ENCODE measurements at regions of chr15 and their contacts with region 1.

Region 1: GRCh38 chr15:59329570-59330350 is 42.9 kb downstream of the MYO1E start:
- DNase-seq: peak; percentile 76
- H3K4me3 Mint-ChIP-seq: peak overlapping the region; percentile 63
- H3K27ac Mint-ChIP-seq: peak overlapping the region; percentile 78
- H3K4me1 Mint-ChIP-seq: peaks cover 93% of the 10 kb centered on the region
- H3K27me3 Mint-ChIP-seq: no peaks in the 10 kb centered on the region
- CTCF ChIP-seq: no peak

Region 2: GRCh38 chr15:58698887-58699641 is 630.7 kb before region 1 on chr15:
- CTCF ChIA-PET with region 1: no interaction called
- intact Hi-C with region 1: no loop called
- DNase-seq: no peak
- H3K4me3 Mint-ChIP-seq: no peak overlapping the region
- H3K27ac Mint-ChIP-seq: peak overlapping the region; percentile 62
- H3K4me1 Mint-ChIP-seq: peaks cover 41% of the 10 kb centered on the region
- H3K27me3 Mint-ChIP-seq: no peaks in the 10 kb centered on the region
- CTCF ChIP-seq: no peak

Region 3: GRCh38 chr15:59247364-59247763 is 82.4 kb before region 1 on chr15:
- CTCF ChIA-PET with region 1: interaction called, 4 read pairs
- intact Hi-C with region 1: loop called (anchors 1 kb)
- DNase-seq: peak; percentile 69
- H3K4me3 Mint-ChIP-seq: no peak overlapping the region
- H3K27ac Mint-ChIP-seq: peak overlapping the region; percentile 69
- H3K4me1 Mint-ChIP-seq: peaks cover 88% of the 10 kb centered on the region
- H3K27me3 Mint-ChIP-seq: no peaks in the 10 kb centered on the region
- CTCF ChIP-seq: peak; percentile 44

Region 4: GRCh38 chr15:59299929-59300617 is 29.7 kb before region 1 on chr15:
- CTCF ChIA-PET with region 1: interaction called, 9 read pairs
- intact Hi-C with region 1: loop called (anchors 5 kb)
- DNase-seq: peak; percentile 83
- H3K4me3 Mint-ChIP-seq: peak overlapping the region; percentile 45
- H3K27ac Mint-ChIP-seq: peak overlapping the region; percentile 92
- H3K4me1 Mint-ChIP-seq: peaks cover 85% of the 10 kb centered on the region
- H3K27me3 Mint-ChIP-seq: no peaks in the 10 kb centered on the region
- CTCF ChIP-seq: no peak

Region 5: DNA sequence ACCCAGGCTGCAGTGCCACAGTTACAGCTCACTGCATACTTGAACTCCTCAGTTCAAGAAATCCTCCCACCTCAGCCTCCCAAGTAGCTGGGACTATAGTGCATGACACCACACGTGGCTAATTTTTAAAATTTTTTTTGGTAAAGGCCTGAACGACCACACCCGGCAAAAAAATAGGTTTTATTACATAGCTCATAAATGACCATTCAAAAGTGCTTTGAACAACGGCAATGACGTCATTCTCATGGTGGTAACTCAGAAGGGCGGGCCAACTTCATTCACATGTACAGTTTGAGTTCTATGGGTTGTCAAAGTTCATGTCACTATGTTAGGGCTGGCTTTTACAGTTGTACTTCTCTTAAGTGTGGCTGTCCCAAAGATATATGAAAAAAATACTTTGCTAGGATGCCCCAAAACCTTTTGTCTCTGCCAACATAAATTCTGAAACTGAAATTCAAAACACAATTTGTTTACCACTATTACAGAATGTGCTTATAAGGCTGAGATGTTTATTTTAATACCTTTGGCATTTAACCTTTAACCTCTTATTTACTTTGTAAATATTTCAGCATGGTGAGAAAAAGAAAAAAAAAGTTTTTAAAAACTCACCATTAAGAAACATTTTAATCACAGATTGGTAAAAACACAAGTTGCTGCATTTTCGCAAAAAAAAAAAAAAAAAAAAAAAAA is 36.7 kb after region 1 on chr15:
- CTCF ChIA-PET with region 1: no interaction called
- intact Hi-C with region 1: loop called (anchors 5 kb)
- DNase-seq: no peak
- H3K4me3 Mint-ChIP-seq: peak overlapping the region; percentile 47
- H3K27ac Mint-ChIP-seq: peak overlapping the region; percentile 62
- H3K4me1 Mint-ChIP-seq: peaks cover 50% of the 10 kb centered on the region
- H3K27me3 Mint-ChIP-seq: no peaks in the 10 kb centered on the region
- CTCF ChIP-seq: no peak

Region 6: DNA sequence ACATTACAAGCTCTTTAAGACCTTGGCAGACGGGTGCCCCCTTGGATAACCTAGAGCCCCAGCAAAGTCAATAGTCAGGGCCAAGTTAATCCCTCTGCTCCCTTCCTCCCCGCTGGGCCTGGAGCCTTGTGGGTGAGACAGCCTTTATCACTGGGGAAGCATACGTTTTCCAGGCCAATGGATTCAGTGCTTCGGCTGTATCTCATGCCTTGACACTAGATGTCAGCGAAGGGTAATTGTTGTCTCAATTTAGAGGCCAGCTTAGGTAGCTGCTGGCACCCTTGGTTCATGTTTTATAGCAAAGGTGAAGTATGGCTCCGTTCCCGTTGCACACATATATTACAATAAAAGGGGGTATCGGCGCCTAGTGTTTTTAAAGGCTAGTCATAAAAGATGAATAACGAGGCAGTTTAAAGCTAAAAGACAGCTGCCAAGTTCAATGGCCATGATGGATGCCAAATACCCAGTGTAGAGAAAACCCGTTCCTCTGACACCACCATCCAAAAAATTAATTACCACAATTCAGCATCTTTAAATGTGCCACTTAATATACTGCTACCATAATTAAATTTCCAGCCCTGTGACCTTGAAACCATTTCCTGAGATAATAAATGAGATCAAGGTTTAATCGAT is 411.6 kb after region 1 on chr15:
- CTCF ChIA-PET with region 1: interaction called, 10 read pairs
- intact Hi-C with region 1: no loop called
- DNase-seq: peak; percentile 23
- H3K4me3 Mint-ChIP-seq: no peak overlapping the region
- H3K27ac Mint-ChIP-seq: no peak overlapping the region
- H3K4me1 Mint-ChIP-seq: peaks cover 7% of the 10 kb centered on the region
- H3K27me3 Mint-ChIP-seq: peaks cover 86% of the 10 kb centered on the region
- CTCF ChIP-seq: no peak

Measured in Calu3 (cell line).